PC-3 (cell line): ENCODE measurements at regions of chr7 and their contacts with region 1.

Region 1: GRCh38 chr7:73885433-73885974 is 24.5 kb downstream of the TMEM270 start:
- DNase-seq: no peak
- ATAC-seq: no peak
- H3K4me3 ChIP-seq: no peak overlapping the region
- H3K27ac ChIP-seq: no peak overlapping the region
- H3K4me1 ChIP-seq: no peaks in the 10 kb centered on the region
- H3K27me3 ChIP-seq: no peaks in the 10 kb centered on the region
- CTCF ChIP-seq: no peak

Region 2: DNA sequence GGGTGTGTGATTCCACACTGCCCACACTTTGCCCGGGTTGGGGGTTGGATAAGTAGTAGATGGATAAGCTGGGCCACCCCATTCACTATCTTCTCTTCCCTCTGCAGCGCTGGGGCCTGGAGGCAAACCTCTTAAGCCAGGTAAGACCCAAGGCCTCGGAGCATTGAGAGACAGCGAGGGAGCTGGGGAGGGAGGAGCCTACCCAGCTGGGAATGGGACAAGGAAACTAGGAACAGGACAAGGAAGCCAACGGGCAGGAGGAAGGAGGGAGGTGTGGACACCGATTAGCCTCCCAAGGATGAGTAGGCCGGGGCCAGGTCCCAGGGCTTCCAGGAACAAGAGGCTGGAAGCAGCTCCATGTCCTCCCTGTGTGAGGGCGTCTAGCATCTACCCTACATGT is 152.1 kb after region 1 on chr7:
- CTCF ChIA-PET with region 1: no interaction called
- POLR2A ChIA-PET with region 1: interaction called, 14 read pairs
- intact Hi-C with region 1: no loop called
- DNase-seq: no peak
- ATAC-seq: no peak
- H3K4me3 ChIP-seq: no peak overlapping the region
- H3K27ac ChIP-seq: no peak overlapping the region
- H3K4me1 ChIP-seq: no peaks in the 10 kb centered on the region
- H3K27me3 ChIP-seq: no peaks in the 10 kb centered on the region
- CTCF ChIP-seq: no peak